A549 (cell line): ENCODE measurements at regions of chr12 and their contacts with region 1.

Region 1: GRCh38 chr12:75480469-75480949 is at the start of gene GLIPR1:
- DNase-seq: peak; percentile 44 to 86
- ATAC-seq: peak; percentile 88
- H3K4me3 ChIP-seq: peak within 1 kb of the TSS; percentile 37
- H3K27ac ChIP-seq: peak within 1 kb of the TSS; percentile 48 to 83
- H3K4me1 ChIP-seq: peaks cover 27% of the 10 kb centered on the region; the same call in 2 of the 3 replicates
- CTCF ChIP-seq: no peak
- EP300 ChIP-seq: no peak
- POLR2A ChIP-seq: peak; percentile 37; the same call in 1 of the 2 replicates
- RAD21 ChIP-seq: 0 out of 5 replicates have a peak, but pooled peaks of 1 of the 2 experiments have one; percentile 11
- polyA plus RNA-seq, gene GLIPR1: 42.2 and 45.8 TPM in 2 replicates

Region 2: GRCh38 chr12:75334384-75335030 is 146.0 kb before region 1 on chr12 and contains the start of gene GLIPR1L1:
- CTCF ChIA-PET with region 1: interaction called, 10 read pairs
- POLR2A ChIA-PET with region 1: interaction called, 3 read pairs
- DNase-seq: peak; percentile 48 to 91
- ATAC-seq: peak; percentile 89
- H3K4me3 ChIP-seq: peak within 1 kb of the TSS; percentile 50
- H3K27ac ChIP-seq: peak within 1 kb of the TSS; percentile 47 to 74; a peak in 5 of 6 replicates
- H3K4me1 ChIP-seq: peaks cover 6% of the 10 kb centered on the region; the same call in 1 of the 3 replicates
- CTCF ChIP-seq: peak; percentile 93
- EP300 ChIP-seq: no peak
- POLR2A ChIP-seq: no peak
- RAD21 ChIP-seq: peak; percentile 78 to 79
- polyA plus RNA-seq, gene GLIPR1L1: not detected in 2 replicates

Region 3: DNA sequence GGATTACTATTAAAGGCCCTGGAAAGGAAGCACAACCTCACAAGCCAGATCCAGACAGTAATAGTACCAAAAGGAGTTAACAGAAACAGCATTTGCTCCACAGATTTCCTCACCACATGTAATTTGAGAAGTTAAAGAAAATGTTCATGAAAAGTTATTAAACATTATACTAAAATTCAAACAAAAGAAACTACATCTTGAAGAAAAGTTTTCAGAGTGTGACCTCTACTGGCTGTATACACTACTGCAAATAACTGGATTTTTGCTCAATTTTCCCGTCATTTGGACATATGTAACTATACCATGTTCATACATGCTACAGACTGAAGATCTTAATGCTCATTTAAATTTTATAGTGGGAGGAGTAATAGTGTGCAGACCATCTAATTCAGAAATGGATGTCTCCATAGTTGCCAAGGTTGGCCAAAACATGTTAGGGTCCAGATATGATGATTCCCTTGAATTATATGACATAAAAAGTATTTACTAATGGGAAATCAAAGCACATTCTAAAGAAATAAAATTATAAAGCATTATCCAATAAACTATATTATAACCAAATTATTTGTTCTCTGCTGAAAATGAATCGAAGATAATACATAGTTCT is 25.3 kb after region 1 on chr12:
- CTCF ChIA-PET with region 1: interaction called, 13 read pairs
- POLR2A ChIA-PET with region 1: interaction called, 7 read pairs
- DNase-seq: peak in 1 of 2 experiments; percentile 52
- ATAC-seq: peak; percentile 40 to 70; a peak in 4 of 6 replicates
- H3K4me3 ChIP-seq: no peak overlapping the region
- H3K27ac ChIP-seq: no peak overlapping the region
- H3K4me1 ChIP-seq: peaks cover 14% of the 10 kb centered on the region
- CTCF ChIP-seq: peak; percentile 80
- EP300 ChIP-seq: no peak
- POLR2A ChIP-seq: no peak
- RAD21 ChIP-seq: peak; percentile 71 to 77